IMR-90 (cell line): ENCODE measurements at regions of chr4 and their contacts with region 1.

Region 1: DNA sequence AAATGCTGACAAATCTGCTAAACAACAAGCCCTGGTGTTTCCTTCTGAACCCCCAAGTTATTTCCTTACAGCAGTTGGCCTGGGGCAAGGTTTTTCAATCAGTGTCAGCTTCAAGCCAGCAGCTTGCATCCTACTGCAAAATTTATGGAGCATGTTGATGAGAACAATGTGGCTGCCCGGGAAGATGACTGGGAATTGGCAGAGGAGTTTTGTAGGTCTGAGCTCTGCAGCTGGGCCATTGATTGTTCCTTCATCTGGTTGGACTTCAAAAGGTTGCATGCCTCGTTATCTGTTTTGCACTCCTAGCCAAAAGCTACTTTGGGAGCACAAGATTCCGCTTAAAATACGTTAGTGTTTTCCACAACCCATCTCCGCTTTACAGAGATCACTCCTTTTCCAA is 1030.3 kb upstream of the LCORL start:
- DNase-seq: no peak
- ATAC-seq: no peak
- H3K4me3 ChIP-seq: no peak overlapping the region
- H3K27ac ChIP-seq: no peak overlapping the region
- H3K4me1 ChIP-seq: no peaks in the 10 kb centered on the region
- H3K27me3 ChIP-seq: no peaks in the 10 kb centered on the region
- CTCF ChIP-seq: no peak
- POLR2A ChIP-seq: no peak
- RAD21 ChIP-seq: no peak

Region 2: GRCh38 chr4:18749391-18749790 is 302.4 kb before region 1 on chr4:
- CTCF ChIA-PET with region 1: no interaction called
- POLR2A ChIA-PET with region 1: no interaction called
- dilution Hi-C with region 1: no loop called
- in situ Hi-C with region 1: loop called (anchors 10 kb)
- intact Hi-C with region 1: no loop called
- DNase-seq: no peak
- ATAC-seq: no peak
- H3K4me3 ChIP-seq: no peak overlapping the region
- H3K27ac ChIP-seq: no peak overlapping the region
- H3K4me1 ChIP-seq: no peaks in the 10 kb centered on the region
- H3K27me3 ChIP-seq: no peaks in the 10 kb centered on the region
- CTCF ChIP-seq: no peak
- POLR2A ChIP-seq: no peak
- RAD21 ChIP-seq: no peak